ENCODE measurements at regions of chr5 and their contacts with region 1.

Region 1: DNA sequence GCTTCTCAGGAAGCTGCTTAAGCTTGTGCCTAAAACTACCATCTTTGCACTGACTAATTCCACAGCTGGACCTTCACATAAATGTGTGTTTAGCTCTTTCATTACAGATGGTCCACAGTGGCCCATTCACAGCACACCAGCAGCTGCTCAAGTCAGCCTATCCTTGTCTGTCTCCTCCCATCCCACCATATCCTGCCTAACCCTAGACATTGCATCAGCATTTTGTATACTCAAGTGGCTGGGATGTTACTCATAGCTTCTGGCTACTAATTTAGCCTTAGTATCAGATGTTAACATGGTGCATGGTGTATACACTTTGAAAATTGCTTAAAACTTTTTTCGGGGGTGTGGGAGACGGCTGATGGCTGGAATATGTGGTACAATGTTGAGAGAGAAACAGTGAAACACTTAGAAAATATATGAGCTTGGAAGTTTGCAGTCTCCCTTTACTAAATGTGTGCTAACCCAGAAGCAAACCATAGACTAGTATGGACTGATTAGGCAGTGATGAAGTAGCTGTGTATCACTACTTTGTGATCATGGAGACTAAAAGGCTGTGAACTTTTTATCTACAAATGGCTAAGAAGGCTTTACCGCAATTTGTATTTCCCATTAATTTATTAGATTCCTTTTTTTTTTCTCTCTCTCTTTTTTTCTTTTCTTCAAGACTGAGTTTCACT is 83.1 kb downstream of the JMY start:
- DNase-seq: peak in 1 of 2 experiments; percentile 4
- H3K4me3 ChIP-seq: no peak overlapping the region
- H3K4me3 Mint-ChIP-seq: no peak overlapping the region
- H3K27ac Mint-ChIP-seq: peak overlapping the region; percentile 12
- H3K4me1 ChIP-seq: no peaks in the 10 kb centered on the region
- H3K4me1 Mint-ChIP-seq: no peaks in the 10 kb centered on the region
- H3K27me3 ChIP-seq: no peaks in the 10 kb centered on the region
- H3K27me3 Mint-ChIP-seq: no peaks in the 10 kb centered on the region
- CTCF ChIP-seq: no peak

Region 2: DNA sequence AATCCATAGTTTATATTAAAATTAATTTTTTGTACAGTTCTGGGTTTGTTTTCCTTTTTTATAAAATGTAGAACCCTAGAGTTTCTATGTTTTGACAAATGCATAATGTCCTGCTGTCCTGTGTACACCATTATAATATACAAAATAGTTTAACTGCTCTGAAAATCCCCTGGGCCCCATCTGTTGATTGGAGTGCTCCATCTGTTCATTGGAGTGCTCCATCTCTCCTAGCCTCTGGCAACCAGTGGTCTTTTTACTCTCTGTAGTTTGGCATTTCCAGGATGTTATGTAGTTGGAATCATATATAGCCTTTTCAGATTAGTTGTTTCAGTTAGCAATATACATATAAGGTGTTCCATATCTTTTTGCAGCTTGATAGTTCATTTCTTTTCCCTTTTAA is 51.9 kb before region 1 on chr5:
- CTCF ChIA-PET with region 1: no interaction called
- POLR2A ChIA-PET with region 1: no interaction called
- intact Hi-C with region 1: loop called (anchors 2 kb)
- DNase-seq: no peak
- H3K4me3 ChIP-seq: no peak overlapping the region
- H3K4me3 Mint-ChIP-seq: no peak overlapping the region
- H3K27ac Mint-ChIP-seq: no peak overlapping the region
- H3K4me1 ChIP-seq: no peaks in the 10 kb centered on the region
- H3K4me1 Mint-ChIP-seq: peaks cover under 1% of the 10 kb centered on the region
- H3K27me3 ChIP-seq: no peaks in the 10 kb centered on the region
- H3K27me3 Mint-ChIP-seq: no peaks in the 10 kb centered on the region
- CTCF ChIP-seq: no peak

Measured in Caco-2 (cell line).